ENCODE measurements at regions of chr12 and their contacts with region 1.

Region 1: GRCh38 chr12:49662998-49663843 is 39.9 kb downstream of the PRPF40B start:
- DNase-seq: peak; percentile 48
- ATAC-seq: peak; percentile 83
- H3K4me3 Mint-ChIP-seq: peak overlapping the region; percentile 80
- H3K27ac Mint-ChIP-seq: peak overlapping the region; percentile 94
- H3K4me1 Mint-ChIP-seq: peaks cover 85% of the 10 kb centered on the region
- H3K27me3 Mint-ChIP-seq: no peaks in the 10 kb centered on the region
- CTCF ChIP-seq: no peak

Region 2: GRCh38 chr12:49553512-49554088 is 109.6 kb before region 1 on chr12:
- CTCF ChIA-PET with region 1: no interaction called
- POLR2A ChIA-PET with region 1: no interaction called
- intact Hi-C with region 1: no loop called
- DNase-seq: no peak
- ATAC-seq: peak; percentile 65
- H3K4me3 Mint-ChIP-seq: no peak overlapping the region
- H3K27ac Mint-ChIP-seq: no peak overlapping the region
- H3K4me1 Mint-ChIP-seq: peaks cover 4% of the 10 kb centered on the region
- H3K27me3 Mint-ChIP-seq: peaks cover 13% of the 10 kb centered on the region
- CTCF ChIP-seq: no peak

Region 3: GRCh38 chr12:49698619-49699545 is 35.7 kb after region 1 on chr12:
- CTCF ChIA-PET with region 1: interaction called, 4 read pairs
- POLR2A ChIA-PET with region 1: interaction called, 265 read pairs
- intact Hi-C with region 1: loop called (anchors 1 kb)
- DNase-seq: peak; percentile 57
- ATAC-seq: peak; percentile 82
- H3K4me3 Mint-ChIP-seq: peak overlapping the region; percentile 84
- H3K27ac Mint-ChIP-seq: peak overlapping the region; percentile 96
- H3K4me1 Mint-ChIP-seq: peaks cover 83% of the 10 kb centered on the region
- H3K27me3 Mint-ChIP-seq: no peaks in the 10 kb centered on the region
- CTCF ChIP-seq: no peak

Region 4: DNA sequence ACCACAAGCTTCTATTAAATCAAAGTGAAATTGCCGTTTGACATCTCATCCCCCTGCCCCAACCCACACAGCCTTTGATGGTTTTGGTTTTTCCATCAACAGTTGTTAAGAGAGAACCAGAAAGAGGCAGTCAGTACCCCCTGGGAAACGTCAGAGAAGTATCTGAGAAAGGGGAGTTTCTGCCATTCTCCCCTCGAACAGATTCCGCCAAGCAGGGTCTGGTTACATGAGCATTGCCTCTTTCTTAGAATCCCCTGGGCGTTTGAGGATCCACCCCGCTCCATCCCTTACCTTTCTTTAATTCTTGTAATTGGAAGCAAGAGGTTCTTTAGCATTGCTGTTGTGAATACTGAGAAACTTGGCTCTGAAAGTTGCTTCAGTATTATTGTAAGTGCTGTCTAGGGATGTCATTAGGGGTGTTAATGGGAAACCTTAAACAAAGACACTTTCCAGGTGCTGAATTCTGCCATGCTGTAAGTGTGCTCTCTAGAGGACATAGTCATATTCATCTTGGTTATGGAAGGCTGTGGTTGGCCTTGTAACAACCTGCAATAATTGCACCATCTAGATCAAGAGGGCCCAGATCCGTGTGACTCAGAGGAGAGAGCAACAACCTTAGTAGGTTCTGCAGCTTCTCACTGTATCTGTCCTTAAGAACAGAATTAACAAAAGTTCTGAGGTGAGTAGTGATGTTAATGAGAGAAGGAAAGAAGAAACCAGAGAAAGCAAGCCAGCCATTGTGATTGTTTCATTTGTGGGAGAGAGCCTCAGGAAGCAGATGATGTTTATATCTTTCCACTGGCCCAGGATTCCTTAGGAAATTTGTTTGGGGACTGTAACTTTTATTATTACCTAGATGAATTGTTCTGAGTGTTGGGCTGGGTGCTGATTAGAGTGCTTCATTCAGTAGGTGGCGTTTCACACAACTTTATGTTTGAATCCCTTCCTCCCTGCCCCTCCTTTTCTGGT is 87.1 kb after region 1 on chr12:
- CTCF ChIA-PET with region 1: no interaction called
- POLR2A ChIA-PET with region 1: interaction called, 6 read pairs
- intact Hi-C with region 1: loop called (anchors 5 kb)
- DNase-seq: no peak
- ATAC-seq: peak; percentile 55
- H3K4me3 Mint-ChIP-seq: peak overlapping the region; percentile 59
- H3K27ac Mint-ChIP-seq: peak overlapping the region; percentile 84
- H3K4me1 Mint-ChIP-seq: peaks cover 89% of the 10 kb centered on the region
- H3K27me3 Mint-ChIP-seq: no peaks in the 10 kb centered on the region
- CTCF ChIP-seq: no peak

Region 5: DNA sequence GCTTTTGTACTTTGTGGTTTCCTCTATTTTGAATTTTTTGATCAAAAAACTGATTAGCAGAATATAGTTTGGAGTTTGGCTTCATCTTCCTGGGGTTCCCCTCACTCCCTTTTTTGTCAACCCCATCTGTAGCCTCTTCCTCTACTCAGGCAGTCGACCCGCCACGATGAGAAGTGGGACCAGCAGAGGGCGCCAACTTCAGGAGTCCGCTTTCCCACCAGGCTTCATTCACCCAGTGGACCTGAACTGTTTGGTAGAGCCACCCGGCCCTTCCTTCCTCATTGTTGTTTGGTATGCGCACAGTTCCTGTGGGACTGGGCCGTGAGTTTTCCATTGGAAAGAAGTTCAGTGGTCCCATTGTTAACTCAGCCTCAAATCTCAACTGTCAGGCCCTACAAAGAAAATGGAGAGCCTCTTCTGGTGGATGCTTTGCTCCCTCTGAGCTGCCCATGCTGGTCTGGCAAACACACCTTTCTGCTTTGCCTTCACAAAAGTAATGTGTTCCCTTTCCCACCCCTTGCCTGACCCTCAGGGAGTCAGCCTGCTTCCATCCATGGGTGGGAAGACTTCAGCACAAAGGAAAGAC is 99.9 kb after region 1 on chr12:
- CTCF ChIA-PET with region 1: no interaction called
- POLR2A ChIA-PET with region 1: no interaction called
- intact Hi-C with region 1: no loop called
- DNase-seq: peak; percentile 59
- ATAC-seq: peak; percentile 83
- H3K4me3 Mint-ChIP-seq: no peak overlapping the region
- H3K27ac Mint-ChIP-seq: peak overlapping the region; percentile 79
- H3K4me1 Mint-ChIP-seq: peaks cover 25% of the 10 kb centered on the region
- H3K27me3 Mint-ChIP-seq: no peaks in the 10 kb centered on the region
- CTCF ChIP-seq: no peak